ENCODE measurements at regions of chr11 and their contacts with region 1.

Region 1: DNA sequence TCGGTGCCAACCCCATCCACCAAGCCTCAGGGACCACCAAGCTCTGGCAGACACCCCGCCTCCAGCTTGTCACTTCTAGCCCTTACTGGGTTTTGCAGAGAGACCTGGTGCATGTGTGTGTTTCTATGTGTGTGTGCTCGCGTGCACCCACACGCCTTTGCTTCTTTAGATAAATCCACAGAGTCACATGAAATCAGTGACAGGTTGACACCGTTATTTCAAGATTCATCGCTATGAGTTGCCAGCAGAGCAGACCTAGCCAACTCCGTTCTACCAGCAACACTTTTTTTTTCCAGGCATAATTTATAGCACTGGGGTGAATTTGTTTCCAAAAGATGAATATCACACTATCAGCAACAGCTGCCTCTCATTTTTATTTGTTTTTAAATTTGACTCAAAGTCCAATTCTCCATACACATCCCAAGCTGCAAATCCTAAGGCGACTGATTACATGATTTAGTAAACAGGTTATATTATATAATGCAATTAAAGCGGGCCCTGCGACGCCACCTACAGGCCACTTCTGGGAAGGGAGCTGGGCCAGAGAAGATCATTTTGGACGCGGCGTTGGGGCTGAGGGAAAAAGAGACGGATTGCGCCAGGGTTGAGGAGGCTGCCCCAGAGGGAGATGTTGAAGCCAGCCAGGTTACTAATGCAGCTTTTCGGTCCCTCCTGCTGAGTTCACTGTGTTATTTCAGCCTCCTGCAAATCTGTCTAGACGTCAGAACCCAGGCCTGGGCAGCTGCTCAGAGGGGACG is 150.5 kb downstream of the FEZ1 start:
- DNase-seq: peak; percentile 84 to 93
- ATAC-seq: peak; percentile 86 to 93 (median 88)
- H3K4me3 ChIP-seq: peak overlapping the region; percentile 2
- H3K27ac ChIP-seq: peak overlapping the region; percentile 67
- H3K4me1 ChIP-seq: peaks cover 41% of the 10 kb centered on the region
- H3K27me3 ChIP-seq: no peaks in the 10 kb centered on the region
- CTCF ChIP-seq: peak; percentile 91

Region 2: DNA sequence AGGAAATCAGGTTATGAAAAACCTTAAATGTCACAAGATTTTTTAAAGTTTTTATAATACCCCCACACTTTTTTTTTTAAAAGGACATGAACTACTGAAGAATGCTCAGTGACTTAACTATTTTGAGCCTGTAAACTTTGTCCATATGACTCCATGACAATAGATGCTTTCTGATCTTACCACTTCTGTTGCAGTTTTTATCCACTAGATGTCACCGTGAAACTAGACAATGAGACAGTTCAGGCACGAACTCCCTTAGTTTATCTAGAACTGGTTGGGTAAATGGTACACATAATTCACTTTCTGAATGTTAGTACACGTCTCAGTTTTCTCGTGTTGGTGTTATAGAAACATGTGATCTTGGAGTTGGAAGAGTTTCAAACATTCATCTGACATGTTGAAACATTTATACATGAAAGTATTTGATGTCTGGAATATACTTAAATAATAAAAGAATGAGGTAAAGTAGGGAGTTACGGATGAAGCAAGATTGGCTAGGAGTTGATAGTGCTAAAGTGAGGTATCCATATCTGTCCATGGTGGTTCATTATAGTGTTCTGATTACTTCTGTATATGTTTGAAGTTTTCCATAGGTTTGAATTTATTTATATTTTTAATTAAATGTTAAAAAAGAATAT is 383.5 kb before region 1 on chr11:
- intact Hi-C with region 1: loop called in 1 of 2 experiments (anchors 5 kb)
- DNase-seq: no peak
- ATAC-seq: peak; percentile 60 to 89 (median 78)
- H3K4me3 ChIP-seq: no peak overlapping the region
- H3K27ac ChIP-seq: no peak overlapping the region
- H3K4me1 ChIP-seq: no peaks in the 10 kb centered on the region
- H3K27me3 ChIP-seq: no peaks in the 10 kb centered on the region
- CTCF ChIP-seq: peak; percentile 70